Posterior vena cava (tissue), 2 donors: ENCODE measurements at regions of chr9 and their contacts with region 1.

Region 1: GRCh38 chr9:134455934-134456739 is 129.9 kb downstream of the RXRA start:
- DNase-seq: peak; percentile 96

Region 2: GRCh38 chr9:134641173-134641985 is 185.2 kb after region 1 on chr9 and contains the start of gene COL5A1:
- intact Hi-C with region 1: loop called (anchors 5 to 10 kb)
- DNase-seq: peak; percentile 97
- total RNA-seq, gene COL5A1: 71.1 to 196 TPM

Region 3: GRCh38 chr9:134698587-134699342 is 242.6 kb after region 1 on chr9:
- intact Hi-C with region 1: loop called in 1 of 2 experiments (anchors 5 kb)
- DNase-seq: peak; percentile 91

Region 4: GRCh38 chr9:135736272-135736978 is 1280.3 kb after region 1 on chr9:
- intact Hi-C with region 1: no loop called
- DNase-seq: no peak